Spleen (tissue), 13 donors: ENCODE measurements at regions of chr7 and their contacts with region 1.

Region 1: GRCh38 chr7:140003913-140004382 is 58.8 kb downstream of the PARP12 start:
- DNase-seq: peak; percentile 41
- H3K4me3 ChIP-seq: no peak overlapping the region
- H3K27ac ChIP-seq: no peak overlapping the region
- H3K4me1 ChIP-seq: peaks cover 0 to 6% (median 4%) of the 10 kb centered on the region in 6 donors
- H3K27me3 ChIP-seq: no peaks in the 10 kb centered on the region
- CTCF ChIP-seq: peak in 8 of 11 experiments; percentile 35 to 60 (median 51)
- POLR2A ChIP-seq: no peak

Region 2: DNA sequence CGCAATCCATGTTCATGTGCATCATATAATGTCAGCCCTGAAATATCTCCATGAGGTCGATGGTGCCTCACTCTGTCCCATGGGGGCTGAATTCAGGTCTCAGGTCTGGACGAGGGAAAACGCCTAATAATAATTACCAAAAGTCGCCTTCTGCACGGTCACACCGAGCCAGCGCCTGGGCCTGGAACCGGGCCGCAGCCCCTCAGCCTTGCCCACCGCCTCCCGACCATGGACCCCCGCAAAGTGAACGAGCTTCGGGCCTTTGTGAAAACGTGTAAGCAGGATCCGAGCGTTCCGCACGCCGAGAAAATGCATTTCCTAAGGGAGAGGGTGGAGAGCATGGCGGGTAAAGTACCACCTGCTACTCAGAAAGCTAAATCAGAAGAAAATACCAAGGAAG is 501.7 kb before region 1 on chr7:
- intact Hi-C with region 1: loop called (anchors 5 kb)
- DNase-seq: no peak
- H3K4me3 ChIP-seq: no peak overlapping the region
- H3K27ac ChIP-seq: no peak overlapping the region
- H3K4me1 ChIP-seq: peaks cover 0 to 14% (median 9%) of the 10 kb centered on the region in 6 donors
- H3K27me3 ChIP-seq: peaks cover 0 to 24% (median 0%) of the 10 kb centered on the region in 7 donors
- CTCF ChIP-seq: no peak
- POLR2A ChIP-seq: no peak

Region 3: GRCh38 chr7:139618482-139619366 is 385.2 kb before region 1 on chr7:
- intact Hi-C with region 1: loop called (anchors 10 kb)
- DNase-seq: no peak
- H3K4me3 ChIP-seq: no peak overlapping the region
- H3K27ac ChIP-seq: no peak overlapping the region
- H3K4me1 ChIP-seq: peaks cover 0 to 3% (median 0%) of the 10 kb centered on the region in 6 donors
- H3K27me3 ChIP-seq: no peaks in the 10 kb centered on the region
- CTCF ChIP-seq: peak in 9 of 11 experiments; percentile 9 to 55 (median 38)
- POLR2A ChIP-seq: no peak

Region 4: DNA sequence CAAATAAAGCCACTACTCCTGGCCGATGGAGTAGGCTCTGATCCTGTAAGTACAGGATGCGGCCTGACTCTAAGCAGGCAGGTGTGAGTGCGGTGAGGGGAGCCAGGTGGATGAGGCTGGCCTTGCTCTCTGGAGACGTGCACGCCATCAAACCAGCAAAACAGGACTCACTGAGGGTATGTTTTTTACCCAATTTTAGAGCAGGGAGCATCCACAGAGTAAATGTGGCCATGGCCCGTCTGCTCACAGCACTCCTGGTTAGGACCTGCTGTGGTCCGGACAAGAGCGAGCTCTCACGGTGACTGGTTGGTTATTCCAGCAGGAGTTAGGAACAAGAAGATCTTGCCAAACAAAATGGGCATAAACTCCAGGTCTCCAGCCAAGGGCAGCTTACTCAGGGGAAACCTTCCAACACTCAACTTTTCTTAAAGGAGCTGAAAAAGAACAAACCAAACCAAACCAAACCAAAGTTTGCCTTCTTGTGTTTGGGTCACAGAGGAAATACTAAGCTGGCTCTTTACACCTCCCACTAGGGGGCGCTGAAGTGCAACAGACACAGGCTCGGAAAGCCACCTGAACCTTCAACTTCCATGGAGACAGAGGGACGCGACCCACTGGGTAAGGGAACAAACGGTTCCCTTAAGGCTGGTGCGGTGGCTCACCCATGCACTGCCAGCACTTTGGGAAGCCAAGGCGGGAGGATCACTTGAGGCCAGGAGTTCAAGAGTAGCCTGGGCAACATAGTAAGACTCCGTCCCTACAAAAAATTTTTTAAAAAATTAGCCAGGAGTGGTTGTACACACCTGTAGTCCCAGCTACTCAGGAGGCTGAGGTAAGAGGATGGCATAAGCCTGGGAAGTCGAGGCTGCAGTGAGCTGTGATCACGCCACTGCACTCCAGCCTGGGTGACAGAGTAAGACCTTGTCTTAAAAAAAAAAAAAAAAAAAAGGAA is 358.1 kb before region 1 on chr7:
- intact Hi-C with region 1: loop called (anchors 5 kb)
- DNase-seq: peak; percentile 91
- H3K4me3 ChIP-seq: no peak overlapping the region
- H3K27ac ChIP-seq: peak overlapping the region in 2 of 8 donors; percentile 85 to 88
- H3K4me1 ChIP-seq: peaks cover 22 to 77% (median 50%) of the 10 kb centered on the region in 6 donors
- H3K27me3 ChIP-seq: no peaks in the 10 kb centered on the region
- CTCF ChIP-seq: peak; percentile 80 to 92 (median 90)
- POLR2A ChIP-seq: no peak

Region 5: DNA sequence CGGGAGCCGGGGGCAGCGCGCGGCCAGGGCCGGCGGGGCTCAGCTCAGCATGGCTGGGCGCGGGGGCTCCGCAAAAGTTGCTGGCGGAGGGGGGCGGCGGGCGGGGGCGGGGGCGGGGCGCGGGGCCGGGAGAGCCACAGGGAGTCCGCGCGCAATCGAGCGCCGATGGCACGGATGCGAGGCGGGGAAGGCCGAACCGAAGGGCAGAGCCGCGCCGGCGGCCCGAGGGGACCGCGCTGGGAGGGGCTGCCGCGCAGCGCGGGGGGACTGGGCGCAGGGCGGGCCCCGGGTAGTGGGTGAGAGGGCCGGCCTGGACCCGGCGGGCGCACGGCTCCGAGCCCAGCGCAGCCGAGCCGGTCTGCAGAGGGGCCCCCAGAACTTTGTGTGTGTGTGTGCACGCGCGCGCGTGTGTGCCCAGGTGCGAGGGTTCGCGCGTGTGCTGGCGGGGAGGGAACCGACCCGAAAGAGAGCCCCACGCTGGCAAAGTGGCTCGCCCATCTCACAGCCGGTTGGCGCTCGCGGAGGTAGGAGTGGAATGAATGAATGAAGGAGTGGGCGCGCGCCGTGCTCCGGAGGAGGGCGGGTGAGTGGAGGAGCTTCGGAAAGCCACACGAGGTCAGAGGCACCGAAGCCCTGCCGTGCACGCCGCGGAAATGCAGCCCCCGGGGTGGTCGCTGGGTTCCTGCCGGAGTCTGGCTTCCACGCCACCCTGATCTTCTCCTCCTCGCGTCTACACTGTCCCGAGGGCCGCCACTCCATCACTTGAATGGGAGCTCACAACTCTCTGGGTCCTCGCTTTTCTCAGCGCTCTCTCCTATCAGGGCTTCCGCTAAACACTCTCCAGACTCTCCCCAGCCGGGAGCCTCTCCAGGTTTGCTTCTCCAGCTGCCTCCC is 225.8 kb before region 1 on chr7 and contains the start of gene HIPK2:
- intact Hi-C with region 1: loop called (anchors 5 kb)
- DNase-seq: peak; percentile 95
- H3K4me3 ChIP-seq: peak within 1 kb of the TSS; percentile 73 to 94 (median 90)
- H3K27ac ChIP-seq: peak within 1 kb of the TSS; percentile 87 to 97 (median 92)
- H3K4me1 ChIP-seq: peaks cover 15 to 46% (median 39%) of the 10 kb centered on the region in 6 donors
- H3K27me3 ChIP-seq: peaks cover 0 to 16% (median 0%) of the 10 kb centered on the region in 7 donors
- CTCF ChIP-seq: peak in 1 of 11 experiments; percentile 8
- POLR2A ChIP-seq: no peak
- total RNA-seq, gene HIPK2: 48.9 to 97.5 (median 58.9) TPM

Region 6: DNA sequence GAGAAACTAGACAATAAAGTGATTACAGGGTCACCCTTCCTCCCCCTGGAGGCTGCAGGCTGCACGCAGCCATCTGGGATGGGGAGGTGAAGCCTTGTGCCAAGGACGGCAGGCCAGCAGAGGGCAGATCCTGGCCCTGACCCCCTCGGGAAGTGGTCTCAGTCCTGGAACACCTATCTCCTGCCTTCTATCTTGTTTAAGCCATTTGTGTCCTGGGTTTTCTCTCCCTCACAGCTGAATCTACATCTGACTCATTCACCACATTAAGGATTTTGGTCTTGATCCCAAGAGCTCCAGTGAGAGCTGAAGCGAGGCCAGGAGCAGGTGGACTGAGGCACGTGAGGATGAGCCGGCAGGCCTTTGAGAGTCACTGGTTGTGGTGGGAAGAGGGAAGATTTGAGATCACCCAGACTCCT is 75.2 kb after region 1 on chr7:
- intact Hi-C with region 1: no loop called
- DNase-seq: no peak
- H3K4me3 ChIP-seq: no peak overlapping the region
- H3K27ac ChIP-seq: no peak overlapping the region
- H3K4me1 ChIP-seq: peaks cover 0 to 25% (median 4%) of the 10 kb centered on the region in 6 donors
- H3K27me3 ChIP-seq: no peaks in the 10 kb centered on the region
- CTCF ChIP-seq: peak in 3 of 11 experiments; percentile 9 to 29 (median 18)
- POLR2A ChIP-seq: no peak